ENCODE measurements at regions of chr2 and their contacts with region 1.

Region 1: DNA sequence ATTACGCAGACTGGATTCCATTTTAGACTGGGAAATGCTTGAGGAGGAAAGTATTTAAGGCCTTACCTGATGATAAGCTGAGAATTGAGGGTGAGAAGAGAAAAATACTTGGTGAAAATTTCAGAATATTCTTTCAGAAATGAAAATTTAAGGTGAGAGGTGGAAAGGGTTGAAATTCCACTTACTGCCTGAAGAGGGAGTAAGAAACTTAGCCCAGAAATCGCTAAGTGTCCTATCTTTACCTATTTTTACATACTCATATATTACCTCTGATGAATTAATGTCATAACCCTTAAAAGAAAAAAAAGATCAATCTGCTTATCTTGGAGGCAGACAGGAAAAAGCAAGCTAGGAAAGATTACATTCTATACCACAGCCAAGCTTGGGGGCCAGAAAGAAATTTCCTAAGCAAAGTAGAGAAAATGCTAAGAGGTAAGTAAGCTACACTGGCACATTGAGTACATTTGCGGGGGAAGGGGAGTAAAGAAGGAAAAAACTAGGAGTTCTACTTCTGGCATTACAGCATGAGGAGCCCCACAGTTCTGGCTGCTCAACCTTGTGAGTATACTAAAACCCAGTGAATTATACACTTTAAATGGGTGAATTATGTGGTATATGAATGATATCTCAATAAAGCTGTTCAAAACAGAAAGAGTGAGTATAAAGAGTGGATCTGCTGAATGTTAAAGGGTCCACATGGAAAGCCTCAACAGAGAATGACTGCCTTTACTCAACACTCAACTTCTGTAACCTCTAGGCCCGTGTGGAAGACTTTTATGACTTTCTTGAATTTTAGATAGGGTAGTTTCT is 33.8 kb downstream of the SMC6 start:
- DNase-seq: peak; percentile 27
- ATAC-seq: peak; percentile 77
- H3K4me3 ChIP-seq: no peak overlapping the region
- H3K27ac ChIP-seq: no peak overlapping the region
- H3K4me1 ChIP-seq: no peaks in the 10 kb centered on the region
- H3K27me3 ChIP-seq: no peaks in the 10 kb centered on the region
- CTCF ChIP-seq: peak; percentile 74
- POLR2A ChIP-seq: no peak
- RAD21 ChIP-seq: peak; percentile 67

Region 2: GRCh38 chr2:17736989-17737388 is 17.2 kb after region 1 on chr2:
- CTCF ChIA-PET with region 1: interaction called, 12 read pairs
- POLR2A ChIA-PET with region 1: no interaction called
- dilution Hi-C with region 1: no loop called
- in situ Hi-C with region 1: no loop called
- intact Hi-C with region 1: loop called (anchors 1 kb)
- DNase-seq: peak; percentile 82
- ATAC-seq: peak; percentile 62
- H3K4me3 ChIP-seq: no peak overlapping the region
- H3K27ac ChIP-seq: peak overlapping the region; percentile 37; the same call in 1 of the 2 replicates
- H3K4me1 ChIP-seq: peaks cover 9% of the 10 kb centered on the region
- H3K27me3 ChIP-seq: no peaks in the 10 kb centered on the region
- CTCF ChIP-seq: no peak
- POLR2A ChIP-seq: no peak
- RAD21 ChIP-seq: no peak

Region 3: GRCh38 chr2:17830053-17831034 is 110.6 kb after region 1 on chr2:
- CTCF ChIA-PET with region 1: no interaction called
- POLR2A ChIA-PET with region 1: no interaction called
- dilution Hi-C with region 1: no loop called
- in situ Hi-C with region 1: no loop called
- intact Hi-C with region 1: loop called (anchors 2 kb)
- DNase-seq: peak; percentile 65
- ATAC-seq: peak; percentile 96
- H3K4me3 ChIP-seq: peak overlapping the region; percentile 14; the same call in 1 of the 2 replicates
- H3K27ac ChIP-seq: no peak overlapping the region
- H3K4me1 ChIP-seq: no peaks in the 10 kb centered on the region
- H3K27me3 ChIP-seq: peaks cover 32% of the 10 kb centered on the region
- CTCF ChIP-seq: peak; percentile 85
- POLR2A ChIP-seq: no peak
- RAD21 ChIP-seq: peak; percentile 60

Region 4: GRCh38 chr2:18149645-18150246 is 430.0 kb after region 1 on chr2:
- CTCF ChIA-PET with region 1: no interaction called
- POLR2A ChIA-PET with region 1: no interaction called
- dilution Hi-C with region 1: no loop called
- in situ Hi-C with region 1: no loop called
- intact Hi-C with region 1: loop called (anchors 10 kb)
- DNase-seq: peak; percentile 63
- ATAC-seq: peak; percentile 75
- H3K4me3 ChIP-seq: no peak overlapping the region
- H3K27ac ChIP-seq: no peak overlapping the region
- H3K4me1 ChIP-seq: no peaks in the 10 kb centered on the region
- H3K27me3 ChIP-seq: peaks cover 6% of the 10 kb centered on the region
- CTCF ChIP-seq: peak; percentile 77
- POLR2A ChIP-seq: no peak
- RAD21 ChIP-seq: peak; percentile 72

Measured in IMR-90 (cell line).